Endothelial cell of umbilical vein (primary cell): ENCODE measurements at regions of chr3 and their contacts with region 1.

Region 1: GRCh38 chr3:134326760-134327593 is 47.3 kb downstream of the AMOTL2 start:
- DNase-seq: peak; percentile 60
- H3K4me3 ChIP-seq: no peak overlapping the region
- H3K27ac ChIP-seq: peak overlapping the region; percentile 67
- H3K4me1 ChIP-seq: peaks cover 31% of the 10 kb centered on the region
- H3K27me3 ChIP-seq: no peaks in the 10 kb centered on the region
- CTCF ChIP-seq: no peak
- POLR2A ChIP-seq: no peak

Region 2: DNA sequence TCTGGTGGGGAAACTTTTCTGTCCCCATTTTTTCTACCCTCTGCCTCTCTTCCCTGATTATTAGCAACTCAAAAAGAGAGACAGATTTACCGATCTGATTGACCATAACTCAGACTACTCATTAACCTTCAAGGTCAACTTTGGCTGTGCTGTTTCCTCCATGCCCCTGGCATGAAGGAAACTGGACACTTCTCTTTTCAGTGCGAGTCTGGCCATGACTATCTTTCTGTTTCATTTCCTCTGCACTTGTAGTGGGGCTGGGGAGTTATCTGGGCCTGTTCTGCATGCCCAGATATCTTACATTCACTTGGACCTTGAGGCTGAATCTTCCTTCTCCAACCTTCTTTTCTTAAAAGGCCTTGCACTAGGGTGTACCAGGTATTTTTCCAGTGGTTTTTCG is 220.4 kb before region 1 on chr3:
- CTCF ChIA-PET with region 1: no interaction called
- POLR2A ChIA-PET with region 1: no interaction called
- dilution Hi-C with region 1: no loop called
- intact Hi-C with region 1: no loop called
- DNase-seq: no peak
- H3K4me3 ChIP-seq: no peak overlapping the region
- H3K27ac ChIP-seq: no peak overlapping the region
- H3K4me1 ChIP-seq: peaks cover 9% of the 10 kb centered on the region
- H3K27me3 ChIP-seq: no peaks in the 10 kb centered on the region
- CTCF ChIP-seq: no peak
- POLR2A ChIP-seq: no peak

Region 3: GRCh38 chr3:134315286-134316106 is 11.5 kb before region 1 on chr3:
- CTCF ChIA-PET with region 1: interaction called, 5 read pairs
- POLR2A ChIA-PET with region 1: interaction called, 3 read pairs
- dilution Hi-C with region 1: no loop called
- intact Hi-C with region 1: loop called (anchors 1 kb)
- DNase-seq: peak; percentile 85
- H3K4me3 ChIP-seq: peak overlapping the region in 1 of 3 experiments; percentile 0
- H3K27ac ChIP-seq: peak overlapping the region; percentile 87
- H3K4me1 ChIP-seq: peaks cover 39% of the 10 kb centered on the region
- H3K27me3 ChIP-seq: no peaks in the 10 kb centered on the region
- CTCF ChIP-seq: no peak
- POLR2A ChIP-seq: peak; percentile 57

Region 4: GRCh38 chr3:134364061-134364935 is 37.3 kb after region 1 on chr3:
- CTCF ChIA-PET with region 1: interaction called, 7 read pairs
- POLR2A ChIA-PET with region 1: interaction called, 3 read pairs
- dilution Hi-C with region 1: no loop called
- intact Hi-C with region 1: loop called (anchors 2 kb)
- DNase-seq: peak; percentile 94
- H3K4me3 ChIP-seq: no peak overlapping the region
- H3K27ac ChIP-seq: peak overlapping the region; percentile 83
- H3K4me1 ChIP-seq: peaks cover 64% of the 10 kb centered on the region
- H3K27me3 ChIP-seq: no peaks in the 10 kb centered on the region
- CTCF ChIP-seq: no peak
- POLR2A ChIP-seq: peak; percentile 76